ENCODE measurements at regions of chr2 and their contacts with region 1.

Region 1: GRCh38 chr2:225512878-225513580 is 113.5 kb downstream of the NYAP2 start:
- DNase-seq: no peak

Region 2: DNA sequence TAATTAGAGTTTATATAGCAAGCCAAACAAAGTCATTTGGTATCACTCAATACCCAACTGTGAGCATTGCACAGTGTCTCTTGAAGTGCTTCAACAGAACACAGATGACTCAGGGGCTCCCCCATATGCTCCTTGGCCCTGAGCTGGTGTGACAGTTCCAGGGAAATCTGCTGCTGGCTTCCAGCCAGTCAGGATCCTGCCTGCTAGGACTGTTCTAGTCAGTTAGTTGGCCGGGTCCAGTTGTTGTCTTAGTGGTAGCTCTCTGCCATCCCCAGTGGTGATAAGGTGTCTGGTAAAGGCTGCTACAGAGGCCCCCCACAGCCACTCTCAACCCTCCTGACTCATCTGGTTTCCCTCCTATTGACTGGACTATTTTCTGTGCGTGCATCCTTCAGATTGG is 1186.3 kb after region 1 on chr2:
- intact Hi-C with region 1: loop called in 1 of 2 experiments (anchors 5 kb)
- DNase-seq: peak; percentile 86

Measured in posterior vena cava (tissue), 2 donors.